CD14-positive monocyte (primary cell): ENCODE measurements at regions of chr5 and their contacts with region 1.

Region 1: DNA sequence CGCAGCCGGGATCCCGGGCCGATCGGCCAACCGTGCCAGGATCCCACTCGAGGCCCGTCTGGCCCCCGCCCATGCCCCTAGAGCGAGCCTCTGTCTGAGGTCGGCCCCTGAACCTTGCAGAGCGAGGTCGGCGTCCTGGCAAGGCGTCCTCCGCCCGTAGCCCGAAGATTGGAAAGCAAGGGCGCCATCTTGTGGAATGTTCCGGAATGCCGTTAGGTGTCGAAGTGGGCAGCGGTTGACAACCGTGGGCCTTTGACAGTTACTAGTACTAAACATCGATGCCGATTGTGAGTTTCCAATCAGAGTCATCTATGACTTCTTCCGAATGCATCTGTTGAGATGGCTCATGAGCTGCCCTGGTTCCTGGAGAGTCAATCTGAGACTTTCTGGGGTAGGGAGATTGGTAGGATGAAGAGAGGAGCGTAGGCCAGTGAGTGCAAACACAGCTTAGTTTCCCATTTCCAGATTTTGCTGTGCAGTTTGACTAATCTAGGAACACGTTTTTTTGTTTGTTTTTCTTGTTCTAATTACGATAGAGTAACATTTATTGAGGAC is 923 bp upstream of the PLK2 start:
- DNase-seq: peak; percentile 80 to 86 (median 82)
- H3K4me3 ChIP-seq: peak overlapping the region; percentile 83 to 89 (median 83)
- H3K4me3 Mint-ChIP-seq: peak overlapping the region; percentile 79 to 87
- H3K27ac ChIP-seq: peak overlapping the region; percentile 79 to 90
- H3K27ac Mint-ChIP-seq: peak overlapping the region in 5 of 7 donors; percentile 32 to 89 (median 72)
- H3K4me1 ChIP-seq: peaks cover 16 to 31% of the 10 kb centered on the region in 2 donors
- H3K4me1 Mint-ChIP-seq: peaks cover 14% of the 10 kb centered on the region
- H3K27me3 ChIP-seq: peaks cover 5 to 12% of the 10 kb centered on the region in 2 donors
- H3K27me3 Mint-ChIP-seq: peaks cover 9 to 19% (median 13%) of the 10 kb centered on the region in 3 donors
- CTCF ChIP-seq: peak; percentile 80

Region 2: DNA sequence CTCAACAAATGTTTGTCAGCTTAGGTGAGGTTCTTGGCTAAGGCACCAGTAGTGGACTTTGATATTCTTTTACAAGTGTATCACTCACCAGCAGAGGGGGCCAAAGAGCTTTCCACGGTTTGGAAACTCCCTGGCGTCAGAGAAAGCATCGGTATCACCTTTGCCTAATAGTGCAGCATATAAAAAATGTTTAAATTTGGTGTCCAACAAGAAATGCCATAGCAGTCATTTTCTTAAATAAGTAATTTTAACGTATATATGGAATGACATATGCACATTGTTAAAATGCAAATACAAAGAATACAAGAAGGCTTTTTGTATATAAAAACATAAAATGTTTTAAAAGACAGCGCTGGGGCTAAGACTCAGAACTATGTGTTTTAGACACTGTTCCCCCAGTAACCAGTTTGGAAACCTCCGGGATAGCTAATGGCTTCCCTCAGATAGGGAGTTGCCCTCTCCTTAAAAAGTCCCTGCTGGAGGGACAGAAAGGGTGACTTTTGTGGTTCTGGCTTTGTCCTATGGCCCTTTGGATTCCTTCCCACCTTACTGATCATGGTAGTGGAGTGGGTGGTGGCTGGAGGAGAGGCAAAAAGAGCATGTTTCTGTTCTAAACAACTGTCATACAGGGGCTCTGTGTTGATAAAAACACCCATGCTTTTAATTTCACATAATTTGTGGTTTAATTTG is 1162.4 kb before region 1 on chr5:
- intact Hi-C with region 1: loop called (anchors 5 kb)
- DNase-seq: peak; percentile 63 to 77 (median 71)
- H3K4me3 ChIP-seq: peak overlapping the region in 1 of 3 experiments; percentile 62
- H3K4me3 Mint-ChIP-seq: peak overlapping the region; percentile 76 to 91
- H3K27ac ChIP-seq: peak overlapping the region in 1 of 2 donors; percentile 36
- H3K27ac Mint-ChIP-seq: peak overlapping the region in 6 of 7 donors; percentile 1 to 82 (median 75)
- H3K4me1 ChIP-seq: peaks cover 10 to 18% of the 10 kb centered on the region in 2 donors
- H3K4me1 Mint-ChIP-seq: peaks cover 14% of the 10 kb centered on the region
- H3K27me3 ChIP-seq: no peaks in the 10 kb centered on the region
- H3K27me3 Mint-ChIP-seq: peaks cover 0 to 4% (median 2%) of the 10 kb centered on the region in 3 donors
- CTCF ChIP-seq: peak; percentile 86

Region 3: GRCh38 chr5:57779383-57780223 is 681.2 kb before region 1 on chr5:
- intact Hi-C with region 1: loop called (anchors 5 kb)
- DNase-seq: peak; percentile 1 to 10 (median 8)
- H3K4me3 ChIP-seq: no peak overlapping the region
- H3K4me3 Mint-ChIP-seq: no peak overlapping the region
- H3K27ac ChIP-seq: no peak overlapping the region
- H3K27ac Mint-ChIP-seq: no peak overlapping the region
- H3K4me1 ChIP-seq: no peaks in the 10 kb centered on the region
- H3K4me1 Mint-ChIP-seq: no peaks in the 10 kb centered on the region
- H3K27me3 ChIP-seq: no peaks in the 10 kb centered on the region
- H3K27me3 Mint-ChIP-seq: peaks cover 0 to 3% (median 2%) of the 10 kb centered on the region in 3 donors
- CTCF ChIP-seq: peak; percentile 26